CD4-positive, alpha-beta T cell (primary cell): ENCODE measurements at regions of chr21 and their contacts with region 1.

Region 1: DNA sequence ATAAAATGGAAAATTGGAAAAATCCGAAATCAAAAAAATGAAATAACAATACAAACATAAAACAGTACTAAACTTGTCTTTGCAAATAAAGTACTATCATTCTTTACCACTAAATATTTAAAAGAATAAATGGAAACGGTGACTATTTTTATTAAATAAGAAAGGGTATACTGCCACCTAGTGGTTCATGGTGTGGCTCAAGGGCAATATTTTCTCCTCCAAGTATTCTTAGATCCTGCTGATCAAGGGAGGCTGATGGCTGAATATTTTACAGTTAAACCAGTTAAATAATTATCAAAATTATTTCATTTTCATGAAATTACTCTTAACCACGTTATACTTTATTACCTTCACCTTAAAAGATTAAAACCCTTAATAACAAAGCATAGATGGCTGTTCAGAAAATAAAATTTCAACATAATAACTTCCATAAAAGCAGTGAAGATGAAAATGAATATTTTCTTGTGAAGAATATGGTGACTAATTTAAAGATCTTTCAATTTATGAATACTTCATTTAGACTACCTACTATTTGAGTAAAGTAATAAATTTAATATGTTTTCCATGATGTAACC is 1793.9 kb downstream of the NCAM2 start:
- DNase-seq: peak in 4 of 14 experiments; percentile 21 to 53 (median 34)
- ATAC-seq: peak; percentile 32
- H3K4me3 ChIP-seq: no peak overlapping the region
- H3K4me3 Mint-ChIP-seq: no peak overlapping the region
- H3K27ac ChIP-seq: no peak overlapping the region
- H3K27ac Mint-ChIP-seq: no peak overlapping the region
- H3K4me1 ChIP-seq: no peaks in the 10 kb centered on the region
- H3K4me1 Mint-ChIP-seq: no peaks in the 10 kb centered on the region
- H3K27me3 ChIP-seq: no peaks in the 10 kb centered on the region
- H3K27me3 Mint-ChIP-seq: no peaks in the 10 kb centered on the region
- CTCF ChIP-seq: peak; percentile 84

Region 2: GRCh38 chr21:20999659-21000058 is 1792.4 kb before region 1 on chr21:
- CTCF ChIA-PET with region 1: no interaction called
- POLR2A ChIA-PET with region 1: no interaction called
- intact Hi-C with region 1: loop called in 1 of 2 experiments (anchors 5 kb)
- DNase-seq: peak in 5 of 14 experiments; percentile 9 to 42 (median 23)
- ATAC-seq: no peak
- H3K4me3 ChIP-seq: no peak overlapping the region
- H3K4me3 Mint-ChIP-seq: peak overlapping the region; percentile 57
- H3K27ac ChIP-seq: no peak overlapping the region
- H3K27ac Mint-ChIP-seq: no peak overlapping the region
- H3K4me1 ChIP-seq: peaks cover 16% of the 10 kb centered on the region
- H3K4me1 Mint-ChIP-seq: peaks cover 13% of the 10 kb centered on the region
- H3K27me3 ChIP-seq: peaks cover 5 to 30% of the 10 kb centered on the region in 2 experiments
- H3K27me3 Mint-ChIP-seq: peaks cover 35% of the 10 kb centered on the region
- CTCF ChIP-seq: peak; percentile 51

Region 3: GRCh38 chr21:21163904-21164303 is 1628.2 kb before region 1 on chr21:
- CTCF ChIA-PET with region 1: no interaction called
- POLR2A ChIA-PET with region 1: no interaction called
- intact Hi-C with region 1: loop called (anchors 1 to 2 kb)
- DNase-seq: peak in 10 of 14 experiments; percentile 1 to 59 (median 8)
- ATAC-seq: no peak
- H3K4me3 ChIP-seq: no peak overlapping the region
- H3K4me3 Mint-ChIP-seq: no peak overlapping the region
- H3K27ac ChIP-seq: no peak overlapping the region
- H3K27ac Mint-ChIP-seq: no peak overlapping the region
- H3K4me1 ChIP-seq: no peaks in the 10 kb centered on the region
- H3K4me1 Mint-ChIP-seq: no peaks in the 10 kb centered on the region
- H3K27me3 ChIP-seq: no peaks in the 10 kb centered on the region
- H3K27me3 Mint-ChIP-seq: no peaks in the 10 kb centered on the region
- CTCF ChIP-seq: peak; percentile 58

Region 4: GRCh38 chr21:22657781-22658180 is 134.3 kb before region 1 on chr21:
- CTCF ChIA-PET with region 1: no interaction called
- POLR2A ChIA-PET with region 1: no interaction called
- intact Hi-C with region 1: no loop called
- DNase-seq: no peak
- ATAC-seq: no peak
- H3K4me3 ChIP-seq: no peak overlapping the region
- H3K4me3 Mint-ChIP-seq: no peak overlapping the region
- H3K27ac ChIP-seq: no peak overlapping the region
- H3K27ac Mint-ChIP-seq: no peak overlapping the region
- H3K4me1 ChIP-seq: no peaks in the 10 kb centered on the region
- H3K4me1 Mint-ChIP-seq: no peaks in the 10 kb centered on the region
- H3K27me3 ChIP-seq: no peaks in the 10 kb centered on the region
- H3K27me3 Mint-ChIP-seq: no peaks in the 10 kb centered on the region
- CTCF ChIP-seq: no peak

Region 5: DNA sequence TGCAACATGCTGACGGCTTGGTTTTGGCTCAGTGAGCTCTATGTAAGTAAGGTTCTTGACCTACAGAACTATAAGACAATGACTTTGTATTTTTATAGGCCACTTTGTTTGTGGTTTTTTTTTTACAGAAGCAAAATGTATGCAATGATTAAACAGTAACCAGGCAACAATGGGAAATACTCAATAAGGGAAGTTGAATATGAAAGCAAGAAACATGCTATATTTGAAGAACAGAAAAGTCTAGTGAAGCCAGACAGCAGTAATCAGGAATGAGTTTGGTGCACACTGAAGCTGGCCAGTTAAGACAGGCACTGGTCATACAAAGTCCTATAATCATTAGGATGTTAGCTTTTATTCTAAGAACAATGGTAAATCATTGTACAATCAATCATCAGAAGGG is 133.0 kb after region 1 on chr21:
- CTCF ChIA-PET with region 1: no interaction called
- POLR2A ChIA-PET with region 1: no interaction called
- intact Hi-C with region 1: no loop called
- DNase-seq: no peak
- ATAC-seq: no peak
- H3K4me3 ChIP-seq: no peak overlapping the region
- H3K4me3 Mint-ChIP-seq: no peak overlapping the region
- H3K27ac ChIP-seq: no peak overlapping the region
- H3K27ac Mint-ChIP-seq: no peak overlapping the region
- H3K4me1 ChIP-seq: no peaks in the 10 kb centered on the region
- H3K4me1 Mint-ChIP-seq: no peaks in the 10 kb centered on the region
- H3K27me3 ChIP-seq: no peaks in the 10 kb centered on the region
- H3K27me3 Mint-ChIP-seq: no peaks in the 10 kb centered on the region
- CTCF ChIP-seq: no peak